Heart right ventricle (tissue), 16 donors: ENCODE measurements at regions of chr4 and their contacts with region 1.

Region 1: GRCh38 chr4:53267026-53267425 is 98.8 kb downstream of the SCFD2 start:
- DNase-seq: no peak
- ATAC-seq: no peak
- H3K4me3 ChIP-seq: no peak overlapping the region
- H3K27ac ChIP-seq: no peak overlapping the region
- H3K4me1 ChIP-seq: no peaks in the 10 kb centered on the region
- H3K27me3 ChIP-seq: no peaks in the 10 kb centered on the region
- CTCF ChIP-seq: no peak

Region 2: DNA sequence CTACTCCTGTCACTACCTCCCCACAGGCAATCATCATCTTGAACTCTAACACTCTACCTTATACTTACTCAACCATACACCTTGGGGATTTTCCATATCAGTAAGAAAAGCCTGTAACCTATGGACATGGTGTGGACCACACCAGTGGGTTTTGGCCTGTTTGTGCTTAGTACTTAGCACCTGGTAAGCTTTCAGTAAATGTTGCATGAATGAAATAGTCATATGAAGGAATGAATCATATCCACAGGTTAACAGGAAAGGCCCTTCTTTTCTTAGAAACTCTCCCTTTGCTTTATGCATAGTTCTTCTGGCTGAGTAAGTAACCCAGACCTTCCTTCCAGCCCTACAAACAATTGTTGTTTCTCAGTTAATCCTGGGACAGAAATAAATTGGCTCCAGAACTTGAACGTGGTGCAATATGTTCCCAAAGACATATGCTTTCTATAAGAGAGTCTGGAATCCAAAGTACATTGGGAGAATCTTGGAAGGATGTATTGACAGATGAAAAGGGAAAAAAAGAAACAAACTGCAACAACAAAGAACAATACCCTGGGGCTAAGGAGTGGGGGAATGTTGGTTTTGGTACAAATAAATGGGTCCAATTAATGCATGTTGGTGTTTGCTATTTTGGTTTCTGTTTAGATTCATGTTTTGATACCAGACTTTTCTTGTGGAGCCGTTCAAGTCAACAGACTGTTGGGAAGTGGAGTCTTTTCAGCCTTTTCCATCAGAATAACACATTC is 377.1 kb before region 1 on chr4:
- intact Hi-C with region 1: no loop called
- DNase-seq: no peak
- ATAC-seq: no peak
- H3K4me3 ChIP-seq: no peak overlapping the region
- H3K27ac ChIP-seq: no peak overlapping the region
- H3K4me1 ChIP-seq: no peaks in the 10 kb centered on the region
- H3K27me3 ChIP-seq: no peaks in the 10 kb centered on the region
- CTCF ChIP-seq: no peak

Region 3: DNA sequence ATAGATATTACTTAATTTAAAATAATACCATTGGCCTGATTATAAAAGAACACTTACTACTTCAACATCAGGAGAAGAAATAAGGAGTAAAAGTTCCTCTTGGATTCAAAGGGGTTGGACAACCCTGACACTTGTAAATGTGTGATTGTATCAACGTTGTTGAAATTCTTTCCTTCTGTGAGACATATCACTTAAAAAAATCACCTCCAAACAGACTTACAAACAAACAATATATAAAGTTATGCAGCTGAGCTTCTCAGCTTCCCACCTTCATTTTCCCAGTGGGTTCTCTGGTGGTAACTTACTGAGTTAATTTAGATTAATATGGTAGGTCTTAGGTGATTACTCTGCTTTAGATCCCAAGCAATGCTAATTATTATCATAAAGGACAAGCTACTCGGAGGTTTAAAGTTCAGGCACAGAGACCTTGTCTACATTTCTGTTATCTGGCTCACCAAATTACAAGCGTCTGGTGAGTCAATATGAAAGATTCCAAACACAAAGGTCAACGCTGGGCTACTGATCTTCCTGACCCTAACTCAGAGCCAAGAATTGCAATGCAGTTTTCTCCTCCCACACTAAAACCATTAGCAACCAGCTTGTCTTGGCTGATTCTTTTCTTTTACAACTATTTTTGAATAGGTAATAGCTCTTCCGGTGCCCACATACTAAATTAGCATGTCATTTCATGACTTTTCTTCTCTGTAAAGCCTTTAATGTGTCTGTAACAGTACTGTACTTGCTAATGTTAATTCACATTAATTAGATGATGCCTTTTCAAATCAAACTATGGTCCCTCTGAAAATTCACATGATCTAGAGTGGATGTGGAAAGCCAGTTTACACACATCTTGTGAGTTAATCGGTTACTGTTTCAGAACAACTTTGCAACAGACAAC is 247.3 kb before region 1 on chr4:
- intact Hi-C with region 1: no loop called
- DNase-seq: no peak
- ATAC-seq: peak in 3 of 8 donors; percentile 55 to 82 (median 56)
- H3K4me3 ChIP-seq: no peak overlapping the region
- H3K27ac ChIP-seq: peak overlapping the region in 5 of 10 donors; percentile 3 to 55 (median 23)
- H3K4me1 ChIP-seq: peaks cover 9 to 67% (median 45%) of the 10 kb centered on the region in 9 donors
- H3K27me3 ChIP-seq: no peaks in the 10 kb centered on the region
- CTCF ChIP-seq: no peak

Region 4: DNA sequence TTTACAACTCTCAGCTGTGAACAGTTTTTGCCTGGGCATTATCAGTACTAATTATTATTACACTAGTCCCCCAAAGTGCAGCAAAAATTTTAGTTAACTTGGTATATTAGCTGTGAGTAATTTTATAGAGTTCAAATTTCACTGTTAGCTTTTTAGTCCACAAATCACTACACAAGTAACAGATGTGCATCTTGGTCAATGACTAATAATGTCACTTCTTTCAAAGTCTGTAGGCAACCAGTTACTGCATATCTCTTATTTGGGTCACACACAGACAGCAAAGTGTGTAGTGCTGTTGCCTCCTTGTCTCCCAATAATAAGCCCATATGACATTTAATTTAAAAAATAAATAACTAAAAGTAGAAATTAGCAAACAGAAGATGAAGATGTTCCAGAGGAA is 61.1 kb before region 1 on chr4:
- intact Hi-C with region 1: loop called in 1 of 10 experiments (anchors 10 kb)
- DNase-seq: no peak
- ATAC-seq: no peak
- H3K4me3 ChIP-seq: no peak overlapping the region
- H3K27ac ChIP-seq: no peak overlapping the region
- H3K4me1 ChIP-seq: no peaks in the 10 kb centered on the region
- H3K27me3 ChIP-seq: no peaks in the 10 kb centered on the region
- CTCF ChIP-seq: no peak